Gastrocnemius medialis (tissue), 4 donors: ENCODE measurements at regions of chr3 and their contacts with region 1.

Region 1: DNA sequence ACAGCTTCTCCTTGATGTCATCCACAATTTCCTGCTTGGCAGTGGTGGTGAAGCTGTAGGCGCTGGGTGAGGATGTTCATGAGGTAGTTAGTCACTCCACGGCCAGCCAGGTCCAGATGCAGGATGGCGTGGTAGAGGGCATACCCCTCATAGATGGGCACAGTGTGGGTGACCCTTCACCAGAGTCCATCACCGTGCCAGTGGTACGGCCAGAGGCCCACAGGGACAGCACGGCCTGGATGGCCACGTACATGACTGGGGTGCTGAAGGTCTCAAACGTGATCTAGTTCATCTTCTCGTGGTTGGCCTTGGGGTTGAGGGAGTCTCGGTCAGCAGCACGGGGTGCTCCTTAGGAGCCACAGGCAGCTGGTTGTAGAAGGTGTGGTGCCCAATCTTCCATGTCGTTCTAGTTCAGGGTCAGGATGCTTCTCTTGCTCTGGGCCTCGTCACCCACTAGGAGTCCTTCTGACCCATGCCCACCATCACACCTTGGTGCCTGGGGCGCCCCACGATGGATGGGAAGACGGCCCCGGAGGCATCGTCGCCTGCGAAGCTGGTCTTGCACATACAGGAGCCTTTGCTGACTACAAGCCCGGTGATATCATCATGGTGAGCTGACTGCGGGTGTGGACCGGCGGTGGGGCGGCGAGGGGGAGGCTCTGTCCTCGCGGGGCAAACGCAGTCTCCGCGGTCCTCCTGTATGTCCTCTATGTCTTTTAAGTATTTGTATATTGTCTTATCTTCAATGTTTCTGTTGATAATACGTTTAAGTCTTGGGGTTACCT is 1119.0 kb downstream of the NAALADL2 start:
- DNase-seq: no peak
- ATAC-seq: no peak
- H3K4me3 ChIP-seq: no peak overlapping the region
- H3K27ac ChIP-seq: no peak overlapping the region
- H3K4me1 ChIP-seq: no peaks in the 10 kb centered on the region
- H3K27me3 ChIP-seq: no peaks in the 10 kb centered on the region
- CTCF ChIP-seq: no peak
- POLR2A ChIP-seq: no peak

Region 2: GRCh38 chr3:175456477-175456876 is 521.7 kb before region 1 on chr3:
- in situ Hi-C with region 1: no loop called
- intact Hi-C with region 1: loop called (anchors 10 kb)
- DNase-seq: no peak
- ATAC-seq: no peak
- H3K4me3 ChIP-seq: no peak overlapping the region
- H3K27ac ChIP-seq: no peak overlapping the region
- H3K4me1 ChIP-seq: no peaks in the 10 kb centered on the region
- H3K27me3 ChIP-seq: no peaks in the 10 kb centered on the region
- CTCF ChIP-seq: no peak
- POLR2A ChIP-seq: no peak

Region 3: DNA sequence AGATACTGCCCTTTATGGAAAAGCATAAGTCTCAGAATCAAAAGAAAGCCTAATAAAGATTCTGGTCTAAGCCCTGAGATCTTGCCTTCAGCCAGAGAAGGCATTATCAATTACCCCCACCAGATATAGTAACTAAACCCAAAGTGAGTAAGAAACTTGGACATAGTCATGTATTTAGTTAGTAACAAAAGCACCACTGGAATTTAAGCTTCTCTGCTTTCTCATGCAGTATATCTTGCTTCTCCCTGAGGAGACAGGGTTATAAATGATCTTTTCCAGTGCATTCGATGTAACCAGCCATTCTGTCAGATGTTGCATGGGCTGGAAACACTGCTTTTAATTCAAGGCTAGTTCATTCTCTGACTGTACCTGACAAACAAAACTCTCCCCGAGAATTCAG is 172.3 kb before region 1 on chr3:
- in situ Hi-C with region 1: no loop called
- intact Hi-C with region 1: no loop called
- DNase-seq: no peak
- ATAC-seq: no peak
- H3K4me3 ChIP-seq: no peak overlapping the region
- H3K27ac ChIP-seq: no peak overlapping the region
- H3K4me1 ChIP-seq: no peaks in the 10 kb centered on the region
- H3K27me3 ChIP-seq: no peaks in the 10 kb centered on the region
- CTCF ChIP-seq: no peak
- POLR2A ChIP-seq: no peak